Naive thymus-derived CD4-positive, alpha-beta T cell (primary cell): ENCODE measurements at regions of chr3 and their contacts with region 1.

Region 1: GRCh38 chr3:157174649-157175498 is 14.9 kb upstream of the CCNL1 start:
- DNase-seq: peak; percentile 89 to 99 (median 99)
- ATAC-seq: peak; percentile 97
- H3K4me3 ChIP-seq: peak overlapping the region; percentile 81
- H3K4me3 Mint-ChIP-seq: peak overlapping the region; percentile 86 to 99 (median 93)
- H3K27ac ChIP-seq: peak overlapping the region; percentile 97
- H3K27ac Mint-ChIP-seq: peak overlapping the region; percentile 91 to 100 (median 98)
- H3K4me1 ChIP-seq: peaks cover 17 to 25% of the 10 kb centered on the region in 2 donors
- H3K4me1 Mint-ChIP-seq: peaks cover 14 to 45% (median 35%) of the 10 kb centered on the region in 7 donors
- H3K27me3 ChIP-seq: no peaks in the 10 kb centered on the region
- H3K27me3 Mint-ChIP-seq: peaks cover 0 to 8% (median 0%) of the 10 kb centered on the region in 5 donors

Region 2: DNA sequence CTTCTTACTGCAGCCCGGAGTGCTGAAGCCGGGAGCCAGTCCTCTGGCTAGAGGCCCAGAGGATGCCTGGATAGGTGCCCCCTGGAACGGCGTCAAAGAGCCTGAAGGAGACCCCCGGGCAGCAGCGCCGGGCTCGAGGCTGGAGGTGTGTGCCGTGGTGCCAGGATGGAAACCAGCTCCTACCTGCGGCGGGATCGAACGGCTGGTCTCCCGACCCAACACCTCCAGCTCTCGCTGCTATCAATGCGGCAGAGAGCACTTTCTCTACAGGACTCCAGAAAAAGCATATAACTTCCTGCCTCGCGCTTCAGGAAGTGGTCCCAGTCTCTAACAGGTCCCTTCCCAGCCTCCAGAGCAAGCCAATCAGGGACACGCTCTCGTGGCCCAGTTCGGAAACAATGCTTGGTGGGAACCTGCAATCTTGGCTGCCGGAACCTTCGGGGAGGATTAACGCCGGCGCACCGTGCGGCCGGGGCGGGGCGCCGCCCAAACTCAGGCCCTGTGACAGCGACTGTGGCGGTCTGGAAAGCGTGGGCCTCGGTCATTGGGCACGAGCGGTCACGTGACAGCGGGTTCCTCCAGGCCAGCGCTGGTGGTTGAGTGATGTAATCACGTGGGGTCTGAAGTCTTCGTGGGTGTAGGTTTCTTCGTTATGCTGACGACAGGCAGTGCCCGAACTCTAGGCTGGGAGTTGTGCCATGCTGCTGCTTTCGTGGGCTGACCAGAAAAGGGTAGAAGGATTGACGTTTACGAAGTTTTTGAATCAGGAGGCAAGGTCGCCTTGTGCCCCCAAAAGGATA is 1320.5 kb before region 1 on chr3 and contains the start of gene SLC33A1:
- CTCF ChIA-PET with region 1: no interaction called
- POLR2A ChIA-PET with region 1: no interaction called
- intact Hi-C with region 1: loop called (anchors 1 kb)
- DNase-seq: peak; percentile 95 to 99 (median 98)
- ATAC-seq: peak; percentile 96
- H3K4me3 ChIP-seq: peak within 1 kb of the TSS; percentile 85
- H3K4me3 Mint-ChIP-seq: peak within 1 kb of the TSS; percentile 86 to 99 (median 95)
- H3K27ac ChIP-seq: peak within 1 kb of the TSS; percentile 90
- H3K27ac Mint-ChIP-seq: peak within 1 kb of the TSS; percentile 97 to 100 (median 99)
- H3K4me1 ChIP-seq: peaks cover 19 to 33% of the 10 kb centered on the region in 2 donors
- H3K4me1 Mint-ChIP-seq: peaks cover 24 to 47% (median 39%) of the 10 kb centered on the region in 7 donors
- H3K27me3 ChIP-seq: no peaks in the 10 kb centered on the region
- H3K27me3 Mint-ChIP-seq: peaks cover 0 to 7% (median 0%) of the 10 kb centered on the region in 5 donors
- total RNA-seq, gene SLC33A1: 19.8 to 40.8 (median 31.9) TPM

Region 3: GRCh38 chr3:156519758-156520162 is 655.1 kb before region 1 on chr3:
- CTCF ChIA-PET with region 1: no interaction called
- POLR2A ChIA-PET with region 1: no interaction called
- intact Hi-C with region 1: loop called in 1 of 2 experiments (anchors 1 kb)
- DNase-seq: no peak
- ATAC-seq: no peak
- H3K4me3 ChIP-seq: no peak overlapping the region
- H3K4me3 Mint-ChIP-seq: no peak overlapping the region
- H3K27ac ChIP-seq: no peak overlapping the region
- H3K27ac Mint-ChIP-seq: no peak overlapping the region
- H3K4me1 ChIP-seq: peaks cover 2 to 6% of the 10 kb centered on the region in 2 donors
- H3K4me1 Mint-ChIP-seq: peaks cover 6 to 26% (median 9%) of the 10 kb centered on the region in 7 donors
- H3K27me3 ChIP-seq: no peaks in the 10 kb centered on the region
- H3K27me3 Mint-ChIP-seq: peaks cover 13 to 84% (median 33%) of the 10 kb centered on the region in 5 donors

Region 4: GRCh38 chr3:157001221-157001957 is 173.5 kb before region 1 on chr3:
- CTCF ChIA-PET with region 1: no interaction called
- POLR2A ChIA-PET with region 1: no interaction called
- intact Hi-C with region 1: no loop called
- DNase-seq: no peak
- ATAC-seq: no peak
- H3K4me3 ChIP-seq: no peak overlapping the region
- H3K4me3 Mint-ChIP-seq: no peak overlapping the region
- H3K27ac ChIP-seq: no peak overlapping the region
- H3K27ac Mint-ChIP-seq: no peak overlapping the region
- H3K4me1 ChIP-seq: no peaks in the 10 kb centered on the region
- H3K4me1 Mint-ChIP-seq: no peaks in the 10 kb centered on the region
- H3K27me3 ChIP-seq: no peaks in the 10 kb centered on the region
- H3K27me3 Mint-ChIP-seq: peaks cover 5 to 36% (median 17%) of the 10 kb centered on the region in 5 donors

Region 5: DNA sequence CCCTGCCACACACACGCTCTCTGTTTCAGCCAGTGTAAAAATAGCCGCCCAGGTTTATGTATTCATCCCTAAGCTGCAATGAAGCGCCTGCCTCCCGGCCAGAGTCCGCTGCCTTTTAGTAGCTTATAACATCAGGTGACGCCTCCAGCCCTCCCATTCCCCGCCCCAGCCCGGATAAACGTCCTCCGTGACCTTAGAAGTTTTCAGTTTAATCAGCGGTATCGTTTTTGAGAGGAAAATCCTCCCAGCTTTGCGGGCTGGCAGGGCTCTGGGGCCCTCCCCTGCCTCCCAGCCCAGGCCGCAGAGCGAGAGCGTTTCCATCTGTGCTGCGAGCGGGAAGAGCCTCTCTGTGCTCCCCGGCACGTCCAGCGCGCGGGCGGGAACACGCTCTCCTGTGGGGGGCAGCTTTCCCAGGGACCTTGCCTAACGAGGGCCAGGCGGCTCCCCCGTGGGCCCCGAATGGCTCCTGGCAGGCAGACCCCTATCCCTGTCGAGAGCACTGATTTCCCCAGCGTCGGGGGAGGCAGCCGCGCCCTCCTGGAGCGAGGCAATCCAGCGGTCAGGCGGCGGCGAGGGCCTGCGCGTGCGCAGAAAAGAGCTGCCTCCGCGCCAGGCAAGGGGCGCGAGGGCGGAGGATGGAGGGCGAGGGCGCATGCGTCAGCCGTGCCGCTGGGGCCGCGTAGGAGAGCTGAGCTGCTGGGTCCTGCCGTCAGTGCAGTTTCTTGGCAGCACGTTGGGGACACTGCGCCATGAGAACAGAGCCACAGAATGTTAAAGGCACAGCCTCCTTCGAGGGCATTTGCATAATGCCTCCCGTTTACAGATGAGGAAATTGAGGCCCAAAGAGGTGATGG is 86.0 kb before region 1 on chr3:
- CTCF ChIA-PET with region 1: interaction called, 4 read pairs
- POLR2A ChIA-PET with region 1: interaction called, 13 read pairs
- intact Hi-C with region 1: loop called (anchors 1 kb)
- DNase-seq: peak; percentile 90 to 97 (median 93)
- ATAC-seq: peak; percentile 95
- H3K4me3 ChIP-seq: peak overlapping the region; percentile 84
- H3K4me3 Mint-ChIP-seq: peak overlapping the region; percentile 81 to 89 (median 87)
- H3K27ac ChIP-seq: peak overlapping the region; percentile 83
- H3K27ac Mint-ChIP-seq: peak overlapping the region; percentile 92 to 98 (median 96)
- H3K4me1 ChIP-seq: peaks cover 11 to 30% of the 10 kb centered on the region in 2 donors
- H3K4me1 Mint-ChIP-seq: peaks cover 11 to 79% (median 23%) of the 10 kb centered on the region in 7 donors
- H3K27me3 ChIP-seq: no peaks in the 10 kb centered on the region
- H3K27me3 Mint-ChIP-seq: peaks cover 0 to 6% (median 0%) of the 10 kb centered on the region in 5 donors

Region 6: GRCh38 chr3:157148196-157148889 is 26.5 kb before region 1 on chr3:
- CTCF ChIA-PET with region 1: interaction called, 3 read pairs
- POLR2A ChIA-PET with region 1: interaction called, 23 read pairs
- intact Hi-C with region 1: no loop called
- DNase-seq: no peak
- ATAC-seq: peak; percentile 11
- H3K4me3 ChIP-seq: no peak overlapping the region
- H3K4me3 Mint-ChIP-seq: no peak overlapping the region
- H3K27ac ChIP-seq: no peak overlapping the region
- H3K27ac Mint-ChIP-seq: peak overlapping the region in 1 of 9 donors; percentile 48
- H3K4me1 ChIP-seq: peaks cover 0 to 5% of the 10 kb centered on the region in 2 donors
- H3K4me1 Mint-ChIP-seq: peaks cover 6 to 49% (median 34%) of the 10 kb centered on the region in 7 donors
- H3K27me3 ChIP-seq: no peaks in the 10 kb centered on the region
- H3K27me3 Mint-ChIP-seq: no peaks in the 10 kb centered on the region

Region 7: GRCh38 chr3:157239082-157239704 is 64.3 kb after region 1 on chr3:
- CTCF ChIA-PET with region 1: no interaction called
- POLR2A ChIA-PET with region 1: interaction called, 3 read pairs
- intact Hi-C with region 1: loop called (anchors 1 kb)
- DNase-seq: peak; percentile 42 to 72 (median 58)
- ATAC-seq: peak; percentile 100
- H3K4me3 ChIP-seq: no peak overlapping the region
- H3K4me3 Mint-ChIP-seq: no peak overlapping the region
- H3K27ac ChIP-seq: no peak overlapping the region
- H3K27ac Mint-ChIP-seq: no peak overlapping the region
- H3K4me1 ChIP-seq: no peaks in the 10 kb centered on the region
- H3K4me1 Mint-ChIP-seq: peaks cover 0 to 6% (median 4%) of the 10 kb centered on the region in 7 donors
- H3K27me3 ChIP-seq: no peaks in the 10 kb centered on the region
- H3K27me3 Mint-ChIP-seq: peaks cover 0 to 8% (median 0%) of the 10 kb centered on the region in 5 donors

Region 8: DNA sequence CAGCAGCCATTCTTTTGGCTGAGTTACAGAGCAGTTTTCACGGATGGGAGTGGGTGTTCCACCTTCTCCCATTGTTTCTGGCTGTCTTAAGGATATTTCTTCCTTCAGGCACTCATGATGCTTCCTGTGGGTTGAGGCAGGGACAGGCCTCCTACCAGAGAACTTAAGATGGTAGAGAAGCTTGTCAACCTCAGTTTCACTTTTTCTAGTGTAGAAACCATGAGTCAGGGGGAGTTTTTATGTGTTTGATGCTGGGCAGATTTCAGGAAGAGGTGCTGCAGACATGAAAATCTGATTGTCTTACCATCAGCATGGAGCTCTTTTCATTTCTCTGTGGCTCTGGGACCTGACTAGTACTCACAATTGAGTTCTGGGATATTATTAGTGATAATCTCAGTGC is 377.1 kb after region 1 on chr3:
- CTCF ChIA-PET with region 1: no interaction called
- POLR2A ChIA-PET with region 1: no interaction called
- intact Hi-C with region 1: no loop called
- DNase-seq: no peak
- ATAC-seq: no peak
- H3K4me3 ChIP-seq: no peak overlapping the region
- H3K4me3 Mint-ChIP-seq: no peak overlapping the region
- H3K27ac ChIP-seq: no peak overlapping the region
- H3K27ac Mint-ChIP-seq: no peak overlapping the region
- H3K4me1 ChIP-seq: no peaks in the 10 kb centered on the region
- H3K4me1 Mint-ChIP-seq: no peaks in the 10 kb centered on the region
- H3K27me3 ChIP-seq: no peaks in the 10 kb centered on the region
- H3K27me3 Mint-ChIP-seq: peaks cover 11 to 44% (median 33%) of the 10 kb centered on the region in 5 donors

Region 9: GRCh38 chr3:158801696-158802408 is 1627.0 kb after region 1 on chr3 and contains the start of gene MFSD1:
- CTCF ChIA-PET with region 1: no interaction called
- POLR2A ChIA-PET with region 1: interaction called, 4 read pairs
- intact Hi-C with region 1: loop called in 1 of 2 experiments (anchors 5 kb)
- DNase-seq: peak; percentile 73 to 91 (median 83)
- ATAC-seq: peak; percentile 94
- H3K4me3 ChIP-seq: peak within 1 kb of the TSS; percentile 88
- H3K4me3 Mint-ChIP-seq: peak within 1 kb of the TSS; percentile 84 to 93 (median 90)
- H3K27ac ChIP-seq: peak within 1 kb of the TSS; percentile 76
- H3K27ac Mint-ChIP-seq: peak within 1 kb of the TSS; percentile 58 to 98 (median 92)
- H3K4me1 ChIP-seq: peaks cover 9 to 11% of the 10 kb centered on the region in 2 donors
- H3K4me1 Mint-ChIP-seq: peaks cover 24 to 50% (median 43%) of the 10 kb centered on the region in 7 donors
- H3K27me3 ChIP-seq: no peaks in the 10 kb centered on the region
- H3K27me3 Mint-ChIP-seq: peaks cover 0 to 24% (median 0%) of the 10 kb centered on the region in 5 donors
- total RNA-seq, gene MFSD1: 24.6 to 66.0 (median 31.1) TPM